GM10248 (cell line): ENCODE measurements at regions of chr1 and their contacts with region 1.

Region 1: GRCh38 chr1:169844941-169845608 is 48.6 kb downstream of the SCYL3 start:
- DNase-seq: no peak
- CTCF ChIP-seq: no peak

Region 2: GRCh38 chr1:169361281-169361680 is 483.8 kb before region 1 on chr1:
- CTCF ChIA-PET with region 1: no interaction called
- POLR2A ChIA-PET with region 1: no interaction called
- DNase-seq: no peak
- CTCF ChIP-seq: no peak

Region 3: DNA sequence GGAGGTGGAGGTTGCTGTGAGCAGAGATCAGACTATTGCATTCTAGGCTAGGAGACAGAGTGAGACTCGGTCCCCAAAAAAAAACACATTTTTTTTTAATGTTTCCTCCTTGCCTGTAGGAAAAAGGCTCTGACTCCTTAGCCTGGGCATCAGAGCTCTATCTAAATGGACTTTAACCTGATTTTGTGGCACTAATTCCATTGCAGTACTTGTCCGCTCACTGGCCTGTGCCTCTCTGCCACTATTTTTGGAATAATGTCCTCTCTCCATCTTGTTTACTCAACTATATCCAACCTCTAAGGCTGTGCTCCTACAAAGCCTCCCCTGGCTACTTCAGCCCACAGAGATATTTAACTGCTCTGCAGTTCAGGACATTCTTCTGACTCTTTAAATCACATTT is 76.9 kb before region 1 on chr1:
- CTCF ChIA-PET with region 1: no interaction called
- POLR2A ChIA-PET with region 1: no interaction called
- DNase-seq: no peak
- CTCF ChIP-seq: no peak

Region 4: DNA sequence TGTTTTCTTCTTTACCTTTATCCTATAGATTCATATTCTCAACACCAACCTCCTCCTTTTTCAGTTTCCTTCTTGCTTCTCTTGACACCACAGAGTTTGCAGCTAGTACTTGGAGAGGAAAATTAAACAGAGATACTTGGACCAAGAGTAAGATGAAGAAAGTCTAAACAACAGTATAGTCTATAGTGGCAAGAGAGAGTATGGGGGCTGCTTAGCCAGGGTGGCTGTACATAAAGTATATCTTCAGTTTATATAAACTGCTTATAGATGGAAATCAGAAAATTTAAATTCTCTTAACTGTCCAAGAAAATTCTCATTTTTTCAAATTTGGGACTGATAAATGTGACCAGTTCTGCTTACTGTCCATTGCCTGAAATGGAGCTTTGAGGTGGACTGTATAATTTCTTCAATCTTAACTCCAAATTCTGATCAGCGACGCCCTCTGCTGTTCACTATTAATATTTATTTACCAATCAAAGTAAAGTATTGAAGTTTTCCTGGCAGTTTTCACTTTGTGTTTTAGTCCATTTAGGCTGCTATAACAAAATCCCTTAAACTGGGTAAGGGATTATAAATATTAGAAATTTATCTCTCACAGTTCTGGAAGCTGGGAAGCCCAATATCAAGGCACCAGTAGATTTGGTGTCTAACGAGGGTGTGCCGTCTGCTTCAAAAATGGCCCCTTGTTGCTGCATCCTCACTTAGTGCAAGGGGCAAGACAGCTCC is 35.5 kb before region 1 on chr1:
- CTCF ChIA-PET with region 1: interaction called, 10 read pairs
- POLR2A ChIA-PET with region 1: no interaction called
- DNase-seq: peak; percentile 42
- CTCF ChIP-seq: peak; percentile 38

Region 5: GRCh38 chr1:169860750-169861149 is 15.7 kb after region 1 on chr1:
- CTCF ChIA-PET with region 1: interaction called, 10 read pairs
- POLR2A ChIA-PET with region 1: no interaction called
- DNase-seq: no peak
- CTCF ChIP-seq: no peak